GM18951 (cell line): ENCODE measurements at regions of chr18 and their contacts with region 1.

Region 1: DNA sequence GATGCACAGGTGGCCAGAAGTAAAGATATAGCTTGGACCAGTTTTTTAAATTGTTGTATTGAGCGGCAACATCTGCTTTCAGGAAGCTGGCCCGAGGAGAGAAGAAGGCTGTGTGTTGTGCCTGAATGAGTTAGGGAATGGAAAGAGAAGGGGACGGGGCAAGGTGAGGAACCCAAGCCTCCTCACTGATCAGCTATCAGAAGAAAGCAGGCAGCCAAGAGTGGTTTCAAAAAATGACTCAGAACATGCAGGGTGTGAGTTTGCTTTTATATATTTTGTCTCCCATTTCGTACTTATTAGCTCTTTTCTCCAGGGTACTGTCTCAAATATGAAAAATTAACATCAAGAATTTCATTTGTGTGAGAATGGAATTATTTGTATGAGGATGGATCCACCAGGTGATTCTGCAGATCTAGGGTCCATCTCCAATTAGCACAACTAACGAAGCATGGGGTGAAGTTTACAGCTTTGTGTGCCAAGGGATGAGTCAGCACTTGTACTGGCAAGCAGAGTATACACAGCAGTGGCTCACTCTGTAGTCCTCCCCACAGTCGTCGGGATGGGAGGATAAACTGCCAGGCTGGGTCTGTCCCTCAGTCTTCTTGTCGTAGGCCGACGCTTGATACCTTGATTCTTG is 175.7 kb downstream of the PIEZO2 start:
- POLR2A ChIP-seq: no peak

Region 2: DNA sequence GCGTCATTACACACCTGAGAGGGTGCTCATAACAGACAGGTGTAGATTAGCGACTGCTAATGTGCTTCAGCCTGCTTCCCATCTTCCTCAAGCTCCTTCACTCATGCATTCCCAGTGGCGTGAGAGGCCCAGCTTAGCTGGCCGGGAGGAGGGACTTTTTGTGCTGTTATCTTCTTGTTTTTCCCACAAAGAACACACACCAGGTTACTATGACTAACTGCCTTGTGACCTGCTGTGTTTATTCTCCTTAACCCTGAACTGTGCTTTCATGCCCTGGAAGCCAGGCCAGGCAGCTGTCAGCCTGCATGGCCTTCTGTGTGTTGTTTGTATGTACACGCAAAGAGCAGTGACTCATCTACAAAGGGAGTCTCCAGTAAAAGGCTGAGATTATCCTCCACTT is 31.8 kb after region 1 on chr18:
- in situ Hi-C with region 1: loop called (anchors 5 kb)
- POLR2A ChIP-seq: no peak